ENCODE measurements at regions of chr6 and their contacts with region 1.

Region 1: GRCh38 chr6:1596088-1596852 is 13.4 kb upstream of the FOXC1 start:
- DNase-seq: peak; percentile 69 to 90 (median 88)
- ATAC-seq: peak; percentile 94
- H3K4me3 ChIP-seq: no peak overlapping the region
- H3K27ac ChIP-seq: no peak overlapping the region
- H3K4me1 ChIP-seq: peaks cover 0 to 11% of the 10 kb centered on the region in 2 experiments; a peak in 1 of 5 replicates
- H3K27me3 ChIP-seq: peaks cover 43 to 70% of the 10 kb centered on the region in 2 experiments
- CTCF ChIP-seq: peak; percentile 86 to 97 (median 91)
- EP300 ChIP-seq: no peak
- POLR2A ChIP-seq: no peak
- RAD21 ChIP-seq: peak; percentile 93 to 94

Region 2: DNA sequence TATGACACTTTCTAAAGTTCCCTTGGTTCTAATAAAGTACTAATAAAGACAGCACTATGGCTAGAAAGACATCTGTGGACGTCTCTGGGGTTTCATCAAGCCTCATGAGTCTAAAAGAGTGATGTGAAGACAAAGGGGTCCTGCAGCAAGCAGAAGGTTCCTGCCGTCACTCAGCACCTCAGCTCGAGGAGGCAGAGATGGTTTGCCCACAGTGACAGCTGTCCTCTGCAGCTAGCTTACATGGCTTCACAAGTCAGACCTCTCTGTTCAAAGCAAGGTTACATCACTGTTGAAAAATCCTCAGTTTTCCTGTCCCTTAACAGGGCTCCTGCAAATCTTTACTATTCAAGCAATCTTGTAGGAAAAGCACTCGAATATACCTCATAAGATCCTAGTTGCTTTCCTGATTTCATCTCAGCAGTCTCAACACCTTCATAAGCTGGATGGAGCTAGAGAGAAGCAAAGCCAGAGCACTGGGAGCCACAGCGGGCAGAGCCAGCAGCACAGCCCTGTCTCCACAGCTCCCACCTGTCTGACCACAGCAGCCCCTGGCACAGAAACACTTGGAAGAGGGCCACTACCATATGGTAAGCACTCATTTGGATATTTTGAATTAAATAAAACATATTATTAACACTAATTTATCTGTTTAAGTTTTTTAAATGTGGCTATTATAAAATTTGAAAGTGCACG is 446.8 kb after region 1 on chr6:
- CTCF ChIA-PET with region 1: no interaction called
- POLR2A ChIA-PET with region 1: no interaction called
- in situ Hi-C with region 1: no loop called
- intact Hi-C with region 1: loop called (anchors 5 kb)
- DNase-seq: no peak
- ATAC-seq: no peak
- H3K4me3 ChIP-seq: no peak overlapping the region
- H3K27ac ChIP-seq: no peak overlapping the region
- H3K4me1 ChIP-seq: no peaks in the 10 kb centered on the region
- H3K27me3 ChIP-seq: peaks cover 3 to 6% of the 10 kb centered on the region in 2 experiments
- CTCF ChIP-seq: no peak
- EP300 ChIP-seq: no peak
- POLR2A ChIP-seq: no peak
- RAD21 ChIP-seq: no peak

Region 3: GRCh38 chr6:2353412-2354137 is 757.3 kb after region 1 on chr6:
- CTCF ChIA-PET with region 1: interaction called, 14 read pairs
- POLR2A ChIA-PET with region 1: no interaction called
- in situ Hi-C with region 1: loop called (anchors 10 kb)
- intact Hi-C with region 1: loop called (anchors 2 kb)
- DNase-seq: peak; percentile 56 to 73 (median 59)
- ATAC-seq: peak; percentile 90
- H3K4me3 ChIP-seq: no peak overlapping the region
- H3K27ac ChIP-seq: no peak overlapping the region
- H3K4me1 ChIP-seq: no peaks in the 10 kb centered on the region
- H3K27me3 ChIP-seq: no peaks in the 10 kb centered on the region; a peak in 2 of 5 replicates
- CTCF ChIP-seq: peak; percentile 72 to 96 (median 80)
- EP300 ChIP-seq: no peak
- POLR2A ChIP-seq: no peak
- RAD21 ChIP-seq: peak; percentile 90 to 93

Region 4: DNA sequence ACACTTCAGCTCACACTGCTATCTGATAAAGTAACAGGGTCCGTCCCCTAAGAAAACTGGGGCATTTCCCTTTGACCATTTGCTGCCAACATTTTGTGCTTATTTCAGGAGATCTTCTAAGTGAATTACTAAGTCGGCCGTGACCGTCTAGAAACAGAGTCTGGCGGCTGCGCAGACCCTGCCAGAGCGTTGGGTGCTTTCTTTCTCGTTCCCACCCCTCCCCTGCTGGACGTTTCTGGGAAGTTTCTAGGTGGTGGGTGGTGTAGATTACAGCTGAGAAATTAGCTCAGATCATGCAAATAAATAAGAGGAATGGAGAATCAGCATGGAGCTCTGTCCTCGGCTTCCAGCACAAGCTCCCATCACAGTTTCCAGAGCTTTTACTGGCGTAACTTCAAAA is 1026.4 kb after region 1 on chr6:
- CTCF ChIA-PET with region 1: no interaction called
- POLR2A ChIA-PET with region 1: no interaction called
- in situ Hi-C with region 1: loop called (anchors 5 kb)
- intact Hi-C with region 1: no loop called
- DNase-seq: peak; percentile 16 to 44 (median 34)
- ATAC-seq: peak; percentile 83
- H3K4me3 ChIP-seq: no peak overlapping the region
- H3K27ac ChIP-seq: no peak overlapping the region
- H3K4me1 ChIP-seq: no peaks in the 10 kb centered on the region
- H3K27me3 ChIP-seq: peaks cover 64% of the 10 kb centered on the region in 2 experiments
- CTCF ChIP-seq: peak in 2 of 3 experiments; percentile 17 to 21; a peak in 2 of 6 replicates
- EP300 ChIP-seq: no peak
- POLR2A ChIP-seq: no peak
- RAD21 ChIP-seq: no peak

Region 5: GRCh38 chr6:2695454-2696095 is 1099.3 kb after region 1 on chr6:
- CTCF ChIA-PET with region 1: interaction called, 5 read pairs
- POLR2A ChIA-PET with region 1: no interaction called
- in situ Hi-C with region 1: no loop called
- intact Hi-C with region 1: loop called (anchors 2 kb)
- DNase-seq: peak in 1 of 4 experiments; percentile 30
- ATAC-seq: peak; percentile 72; the same call in 2 of the 3 replicates
- H3K4me3 ChIP-seq: no peak overlapping the region
- H3K27ac ChIP-seq: no peak overlapping the region
- H3K4me1 ChIP-seq: no peaks in the 10 kb centered on the region
- H3K27me3 ChIP-seq: peaks cover 51 to 59% of the 10 kb centered on the region in 2 experiments
- CTCF ChIP-seq: peak; percentile 17 to 62 (median 48); a peak in 4 of 6 replicates
- EP300 ChIP-seq: no peak
- POLR2A ChIP-seq: no peak
- RAD21 ChIP-seq: peak; percentile 83 to 84

Measured in K562 (cell line).